ENCODE measurements at regions of chr9 and their contacts with region 1.

Region 1: DNA sequence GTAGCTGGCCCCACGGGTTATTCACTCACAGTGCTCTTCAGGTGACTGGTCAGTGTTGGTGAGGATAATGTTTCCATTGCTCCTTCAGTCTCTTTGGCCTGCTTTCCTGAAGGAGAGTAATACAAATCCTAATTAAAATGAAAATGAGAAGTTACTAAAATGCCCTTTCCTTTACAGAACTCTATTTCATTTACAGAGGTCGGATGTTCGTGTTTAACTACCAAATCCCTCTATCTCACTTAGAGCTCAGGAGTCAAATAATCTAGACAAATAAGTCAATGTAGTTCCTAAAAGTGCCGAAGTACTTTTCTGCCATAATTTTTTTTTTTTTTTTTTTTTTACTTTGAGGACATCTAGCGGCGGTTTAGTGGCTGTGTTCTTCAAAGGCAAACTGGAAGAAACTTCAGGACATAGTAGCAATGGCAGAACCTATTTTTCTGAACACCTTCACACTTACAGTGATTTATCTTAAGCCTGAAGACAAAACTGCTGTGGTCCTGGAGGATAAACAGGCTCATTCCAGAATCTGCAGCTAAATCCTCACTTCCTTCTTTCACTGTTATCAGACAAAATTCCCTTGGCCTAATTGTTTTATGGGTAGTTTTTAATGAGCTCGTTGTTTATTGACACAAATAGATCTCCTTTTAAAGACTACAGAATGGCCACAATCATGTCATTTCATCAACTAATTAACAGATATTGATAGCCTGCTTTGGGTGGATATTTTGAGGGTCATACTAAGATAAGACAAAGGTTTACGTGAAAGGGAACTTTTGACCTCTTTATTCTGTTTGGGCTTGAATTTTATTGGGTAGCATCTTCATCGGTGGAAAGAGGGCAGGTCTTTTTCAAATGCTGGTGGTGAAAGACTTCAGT is 207.6 kb upstream of the DMRTA1 start:
- DNase-seq: no peak
- H3K4me3 ChIP-seq: no peak overlapping the region
- H3K27ac ChIP-seq: no peak overlapping the region
- H3K4me1 ChIP-seq: no peaks in the 10 kb centered on the region
- H3K27me3 ChIP-seq: no peaks in the 10 kb centered on the region
- CTCF ChIP-seq: peak; percentile 52

Region 2: DNA sequence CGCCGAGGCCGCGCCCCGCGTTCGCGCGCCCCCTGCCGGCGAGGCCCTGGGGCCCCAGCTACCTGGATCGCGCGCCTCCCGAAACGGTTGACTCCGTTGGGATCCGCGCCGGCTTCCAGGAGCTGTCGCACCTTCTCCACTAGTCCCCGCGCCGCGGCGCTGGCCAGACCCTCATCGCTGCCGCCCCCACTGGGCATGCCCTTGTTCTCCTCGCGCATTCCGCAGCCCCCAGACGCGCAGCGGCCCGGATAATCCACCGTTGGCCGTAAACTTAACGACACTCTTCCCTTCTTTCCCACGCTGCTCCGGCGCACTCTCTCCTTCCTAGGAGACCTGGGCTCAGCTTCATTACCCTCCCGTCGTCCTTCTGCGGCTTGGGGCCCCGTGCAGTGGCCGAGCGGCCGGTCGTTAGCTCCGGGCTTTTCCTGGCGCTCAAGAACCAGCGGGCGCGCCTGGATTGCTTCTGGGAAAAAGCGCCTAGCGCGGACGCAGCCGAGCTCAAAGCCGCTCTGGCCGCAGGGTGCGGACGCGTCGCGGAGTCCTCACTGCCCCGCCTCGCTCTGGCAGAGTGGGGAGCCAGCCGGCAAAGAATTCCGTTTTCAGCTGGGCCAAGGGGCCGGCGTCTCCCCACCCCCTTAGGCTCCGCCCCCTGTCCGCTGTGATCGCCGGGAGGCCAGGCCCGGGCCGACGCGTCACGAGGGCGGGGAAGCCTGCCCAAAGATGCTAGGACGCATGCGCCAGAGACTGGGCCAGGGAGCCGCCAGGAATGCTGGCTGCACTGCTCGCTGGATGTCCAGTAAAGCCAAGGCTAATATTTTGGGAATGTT is 230.1 kb before region 1 on chr9 and contains the start of gene CDKN2B:
- intact Hi-C with region 1: loop called (anchors 10 kb)
- DNase-seq: peak; percentile 98
- H3K4me3 ChIP-seq: peak within 1 kb of the TSS; percentile 57
- H3K27ac ChIP-seq: peak within 1 kb of the TSS; percentile 88
- H3K4me1 ChIP-seq: no peaks in the 10 kb centered on the region
- H3K27me3 ChIP-seq: peaks cover 18% of the 10 kb centered on the region
- CTCF ChIP-seq: peak; percentile 98
- total RNA-seq, gene CDKN2B: 57.0 to 76.6 TPM

Region 3: DNA sequence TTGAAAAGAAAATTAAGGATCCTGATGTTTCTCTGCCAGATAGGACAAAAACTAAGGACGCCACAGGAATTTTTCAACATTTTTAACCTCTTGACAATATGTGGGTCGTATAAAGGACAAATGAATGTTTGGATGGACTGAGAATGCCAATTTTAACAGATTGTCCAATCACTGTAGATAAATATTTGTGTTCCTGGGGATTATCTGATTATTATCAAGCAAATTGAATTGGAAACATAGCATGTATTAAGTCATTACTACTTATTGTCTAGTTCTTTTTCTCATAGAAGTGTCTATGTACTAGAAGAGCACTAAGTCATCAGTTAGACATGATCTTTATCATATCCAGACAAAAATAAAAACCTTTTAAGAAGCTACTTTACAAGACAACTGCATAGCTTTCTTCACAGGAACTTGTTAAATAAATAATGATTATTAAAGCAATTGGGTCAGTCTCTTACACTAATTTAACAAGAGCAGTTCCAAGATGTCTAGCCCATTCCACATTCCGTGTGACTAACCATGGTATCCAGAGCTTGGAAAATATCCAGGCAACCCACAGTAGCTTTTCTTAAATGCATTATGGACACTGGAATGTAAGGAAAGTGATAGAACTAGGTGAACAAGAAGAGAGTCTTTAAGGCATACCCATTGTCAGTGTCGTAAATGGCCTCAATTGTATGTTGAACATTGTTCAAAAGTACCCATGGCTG is 102.4 kb before region 1 on chr9:
- intact Hi-C with region 1: loop called (anchors 10 kb)
- DNase-seq: no peak
- H3K4me3 ChIP-seq: no peak overlapping the region
- H3K27ac ChIP-seq: no peak overlapping the region
- H3K4me1 ChIP-seq: no peaks in the 10 kb centered on the region
- H3K27me3 ChIP-seq: no peaks in the 10 kb centered on the region
- CTCF ChIP-seq: no peak

Region 4: GRCh38 chr9:22342491-22343217 is 103.6 kb after region 1 on chr9:
- intact Hi-C with region 1: no loop called
- DNase-seq: no peak
- H3K4me3 ChIP-seq: no peak overlapping the region
- H3K27ac ChIP-seq: no peak overlapping the region
- H3K4me1 ChIP-seq: no peaks in the 10 kb centered on the region
- H3K27me3 ChIP-seq: no peaks in the 10 kb centered on the region
- CTCF ChIP-seq: no peak